GM12878 (cell line): ENCODE measurements at regions of chr18 and their contacts with region 1.

Region 1: DNA sequence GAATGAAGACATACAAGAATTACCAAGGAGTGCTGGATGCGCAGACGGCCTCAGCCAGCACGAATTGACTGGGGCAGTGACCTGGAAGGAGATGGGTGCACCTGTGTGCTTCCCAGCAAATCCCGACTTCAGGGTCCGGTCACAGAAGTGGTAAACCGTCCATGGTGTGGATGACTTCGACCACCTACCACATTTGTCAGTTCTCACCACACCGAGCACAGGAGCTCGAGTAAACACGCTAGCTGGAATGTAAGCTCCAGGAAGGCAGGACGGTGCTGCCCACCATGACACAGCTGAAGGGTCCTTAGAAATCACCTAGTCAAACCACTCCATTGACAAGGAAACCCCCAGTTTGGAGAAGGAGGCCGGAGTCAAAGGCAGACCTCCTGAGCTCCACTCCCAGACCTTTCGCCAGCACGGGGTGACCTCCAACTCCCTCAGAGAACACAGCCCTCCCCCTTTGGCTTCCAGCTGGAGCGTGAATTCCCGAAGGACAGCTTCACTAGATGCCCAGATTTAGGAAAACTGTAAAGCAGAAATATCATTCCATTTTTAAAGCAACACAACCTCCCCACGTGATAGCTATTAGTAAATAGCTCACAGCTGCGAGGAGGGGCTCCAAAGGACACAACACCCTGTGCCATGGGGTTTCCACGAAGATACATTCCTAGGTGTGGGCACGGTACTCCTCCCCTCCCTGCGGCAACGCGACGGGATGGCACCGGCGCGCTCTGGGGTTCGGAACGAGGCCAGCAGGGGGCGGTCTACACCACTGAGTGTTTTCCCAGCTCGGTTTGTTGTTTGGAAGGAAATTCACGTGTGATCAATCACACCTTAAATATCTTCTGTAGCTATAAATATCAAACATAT is 34.1 kb upstream of the GNAL start:
- DNase-seq: no peak
- ATAC-seq: peak; percentile 80
- H3K4me3 ChIP-seq: no peak overlapping the region
- H3K27ac ChIP-seq: no peak overlapping the region
- H3K4me1 ChIP-seq: no peaks in the 10 kb centered on the region
- H3K27me3 ChIP-seq: peaks cover 2% of the 10 kb centered on the region in 2 experiments; a peak in 2 of 4 replicates
- CTCF ChIP-seq: peak; percentile 66 to 79 (median 71)
- EP300 ChIP-seq: no peak
- POLR2A ChIP-seq: no peak
- RAD21 ChIP-seq: peak; percentile 71

Region 2: GRCh38 chr18:11518788-11519685 is 135.9 kb before region 1 on chr18:
- CTCF ChIA-PET with region 1: no interaction called
- POLR2A ChIA-PET with region 1: no interaction called
- RAD21 ChIA-PET with region 1: no interaction called
- SMC1A ChIA-PET with region 1: no interaction called
- in situ Hi-C with region 1: no loop called
- intact Hi-C with region 1: no loop called
- DNase-seq: no peak
- ATAC-seq: peak; percentile 100
- H3K4me3 ChIP-seq: no peak overlapping the region
- H3K27ac ChIP-seq: no peak overlapping the region
- H3K4me1 ChIP-seq: no peaks in the 10 kb centered on the region
- H3K27me3 ChIP-seq: peaks cover 0 to 2% of the 10 kb centered on the region in 2 experiments; a peak in 2 of 4 replicates
- CTCF ChIP-seq: peak; percentile 83 to 97 (median 92)
- EP300 ChIP-seq: no peak
- POLR2A ChIP-seq: no peak
- RAD21 ChIP-seq: peak; percentile 83

Region 3: GRCh38 chr18:11665587-11665986 is 10.6 kb after region 1 on chr18:
- CTCF ChIA-PET with region 1: interaction called, 19 read pairs
- POLR2A ChIA-PET with region 1: no interaction called
- RAD21 ChIA-PET with region 1: no interaction called
- SMC1A ChIA-PET with region 1: no interaction called
- in situ Hi-C with region 1: no loop called
- intact Hi-C with region 1: no loop called
- DNase-seq: no peak
- ATAC-seq: no peak
- H3K4me3 ChIP-seq: no peak overlapping the region
- H3K27ac ChIP-seq: no peak overlapping the region
- H3K4me1 ChIP-seq: no peaks in the 10 kb centered on the region
- H3K27me3 ChIP-seq: peaks cover 3 to 13% of the 10 kb centered on the region in 2 experiments
- CTCF ChIP-seq: no peak
- EP300 ChIP-seq: no peak
- POLR2A ChIP-seq: no peak
- RAD21 ChIP-seq: no peak

Region 4: GRCh38 chr18:11741505-11742145 is 86.7 kb after region 1 on chr18:
- CTCF ChIA-PET with region 1: interaction called, 3 read pairs
- POLR2A ChIA-PET with region 1: no interaction called
- RAD21 ChIA-PET with region 1: interaction called, 3 read pairs
- SMC1A ChIA-PET with region 1: interaction called, 3 read pairs
- in situ Hi-C with region 1: no loop called
- intact Hi-C with region 1: loop called (anchors 5 kb)
- DNase-seq: no peak
- ATAC-seq: peak; percentile 64; the same call in 2 of the 3 replicates
- H3K4me3 ChIP-seq: no peak overlapping the region
- H3K27ac ChIP-seq: no peak overlapping the region
- H3K4me1 ChIP-seq: no peaks in the 10 kb centered on the region
- H3K27me3 ChIP-seq: peaks cover 0 to 3% of the 10 kb centered on the region in 2 experiments; a peak in 2 of 4 replicates
- CTCF ChIP-seq: peak; percentile 54 to 71 (median 68)
- EP300 ChIP-seq: no peak
- POLR2A ChIP-seq: no peak
- RAD21 ChIP-seq: peak; percentile 52

Region 5: GRCh38 chr18:11808001-11808855 is 153.3 kb after region 1 on chr18:
- CTCF ChIA-PET with region 1: no interaction called
- POLR2A ChIA-PET with region 1: no interaction called
- RAD21 ChIA-PET with region 1: no interaction called
- SMC1A ChIA-PET with region 1: no interaction called
- in situ Hi-C with region 1: no loop called
- intact Hi-C with region 1: no loop called
- DNase-seq: no peak
- ATAC-seq: no peak
- H3K4me3 ChIP-seq: no peak overlapping the region
- H3K27ac ChIP-seq: no peak overlapping the region
- H3K4me1 ChIP-seq: no peaks in the 10 kb centered on the region
- H3K27me3 ChIP-seq: no peaks in the 10 kb centered on the region; a peak in 2 of 4 replicates
- CTCF ChIP-seq: no peak
- EP300 ChIP-seq: no peak
- POLR2A ChIP-seq: no peak
- RAD21 ChIP-seq: no peak

Region 6: GRCh38 chr18:11995445-11996189 is 340.6 kb after region 1 on chr18:
- CTCF ChIA-PET with region 1: interaction called, 10 read pairs
- POLR2A ChIA-PET with region 1: no interaction called
- RAD21 ChIA-PET with region 1: interaction called, 12 read pairs
- SMC1A ChIA-PET with region 1: no interaction called
- in situ Hi-C with region 1: no loop called
- intact Hi-C with region 1: no loop called
- DNase-seq: no peak
- ATAC-seq: peak; percentile 93
- H3K4me3 ChIP-seq: no peak overlapping the region
- H3K27ac ChIP-seq: no peak overlapping the region
- H3K4me1 ChIP-seq: peaks cover 8% of the 10 kb centered on the region
- H3K27me3 ChIP-seq: no peaks in the 10 kb centered on the region
- CTCF ChIP-seq: peak; percentile 80 to 90 (median 87)
- EP300 ChIP-seq: no peak
- POLR2A ChIP-seq: no peak
- RAD21 ChIP-seq: peak; percentile 88

Region 7: DNA sequence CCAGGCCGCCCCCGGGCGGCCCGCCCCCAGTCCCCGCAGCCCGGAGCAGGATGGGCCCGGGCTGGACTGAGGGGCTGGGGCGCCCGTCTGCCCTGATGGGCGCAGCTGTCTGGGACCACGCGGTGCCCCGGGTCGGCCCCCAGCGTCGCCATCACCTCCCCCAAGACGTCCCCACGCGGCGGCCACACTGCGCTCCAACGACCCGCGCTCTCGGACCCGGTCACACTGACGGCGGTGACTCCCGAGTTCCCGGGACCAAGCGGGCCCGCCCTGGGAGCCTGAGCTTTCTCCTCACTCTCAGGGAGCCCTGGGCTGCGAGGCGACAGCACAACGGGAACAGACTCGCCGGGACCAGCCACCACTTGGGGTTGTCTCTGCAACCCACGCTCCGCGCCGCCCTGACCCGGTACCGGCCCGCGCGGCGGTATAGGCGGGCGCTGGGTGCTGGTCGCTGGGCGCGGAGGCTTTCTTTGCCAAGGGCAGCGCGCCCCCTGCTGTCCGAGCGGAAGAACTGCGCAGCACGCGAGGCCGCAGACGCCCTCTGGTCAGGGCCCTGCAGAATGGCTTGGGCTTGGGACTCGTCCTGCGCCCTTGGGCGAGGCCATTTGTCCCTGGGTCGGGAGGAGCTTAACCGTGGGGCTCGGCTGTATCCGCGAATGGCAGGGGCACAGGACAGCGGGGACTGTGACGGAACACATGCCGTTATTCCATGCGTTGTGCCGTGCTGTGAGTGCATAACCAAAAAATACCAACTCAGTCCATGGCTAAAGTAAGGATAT is 383.9 kb after region 1 on chr18:
- CTCF ChIA-PET with region 1: interaction called, 7 read pairs
- POLR2A ChIA-PET with region 1: no interaction called
- RAD21 ChIA-PET with region 1: no interaction called
- SMC1A ChIA-PET with region 1: no interaction called
- in situ Hi-C with region 1: no loop called
- intact Hi-C with region 1: loop called (anchors 2 kb)
- DNase-seq: no peak
- ATAC-seq: peak; percentile 97
- H3K4me3 ChIP-seq: peak overlapping the region; percentile 53; the same call in 1 of the 2 replicates
- H3K27ac ChIP-seq: no peak overlapping the region
- H3K4me1 ChIP-seq: peaks cover 5% of the 10 kb centered on the region
- H3K27me3 ChIP-seq: peaks cover 0 to 3% of the 10 kb centered on the region in 2 experiments; a peak in 2 of 4 replicates
- CTCF ChIP-seq: peak; percentile 95 to 99 (median 95); a peak in 5 of 6 replicates
- EP300 ChIP-seq: no peak
- POLR2A ChIP-seq: no peak
- RAD21 ChIP-seq: peak; percentile 83